Activated CD8-positive, alpha-beta memory T cell treated with anti-CD3 and anti-CD28 coated beads, Interleukin-2, amount 10 ng/mL, durations not matched to agents 7 days and 5 days (primary cell): ENCODE measurements at regions of chr5 and their contacts with region 1.

Region 1: DNA sequence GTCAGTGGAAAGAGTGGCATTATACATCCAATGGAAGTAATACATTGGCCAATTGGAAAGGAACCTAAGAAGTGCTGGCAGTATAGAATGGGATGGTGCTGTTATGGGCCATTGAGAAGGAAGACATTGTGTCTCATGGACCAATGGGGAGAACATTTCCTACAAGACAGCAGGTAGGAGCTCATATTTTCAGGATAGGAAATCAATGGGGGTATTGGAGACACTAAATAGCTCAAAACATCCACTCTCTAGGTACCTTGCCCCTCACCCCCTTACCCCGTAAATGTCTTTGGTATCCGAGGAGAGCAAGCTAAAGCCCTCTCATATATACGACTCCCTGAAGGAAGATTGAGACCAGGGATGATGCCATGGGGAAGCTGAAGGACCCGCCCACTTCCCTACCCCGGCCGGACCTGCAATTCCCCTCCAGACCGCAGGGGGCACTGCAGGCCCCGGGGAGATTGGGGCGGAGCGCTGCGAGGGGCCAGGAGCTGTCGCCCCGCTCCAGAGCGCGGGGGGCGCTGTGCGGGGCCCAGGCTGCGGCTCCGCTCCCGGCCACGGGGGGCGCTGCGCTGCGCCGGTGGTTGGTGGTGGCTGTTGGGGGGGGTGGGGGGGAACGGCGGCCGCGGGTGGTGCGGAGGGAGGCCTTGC is at the start of gene KDM3B:
- DNase-seq: peak; percentile 91
- ATAC-seq: peak; percentile 74
- H3K4me3 Mint-ChIP-seq: peak within 1 kb of the TSS; percentile 94
- H3K27ac Mint-ChIP-seq: peak within 1 kb of the TSS; percentile 97
- H3K4me1 Mint-ChIP-seq: peaks cover 42% of the 10 kb centered on the region
- H3K27me3 Mint-ChIP-seq: no peaks in the 10 kb centered on the region
- total RNA-seq, gene KDM3B: 57.4 to 60.5 TPM

Region 2: DNA sequence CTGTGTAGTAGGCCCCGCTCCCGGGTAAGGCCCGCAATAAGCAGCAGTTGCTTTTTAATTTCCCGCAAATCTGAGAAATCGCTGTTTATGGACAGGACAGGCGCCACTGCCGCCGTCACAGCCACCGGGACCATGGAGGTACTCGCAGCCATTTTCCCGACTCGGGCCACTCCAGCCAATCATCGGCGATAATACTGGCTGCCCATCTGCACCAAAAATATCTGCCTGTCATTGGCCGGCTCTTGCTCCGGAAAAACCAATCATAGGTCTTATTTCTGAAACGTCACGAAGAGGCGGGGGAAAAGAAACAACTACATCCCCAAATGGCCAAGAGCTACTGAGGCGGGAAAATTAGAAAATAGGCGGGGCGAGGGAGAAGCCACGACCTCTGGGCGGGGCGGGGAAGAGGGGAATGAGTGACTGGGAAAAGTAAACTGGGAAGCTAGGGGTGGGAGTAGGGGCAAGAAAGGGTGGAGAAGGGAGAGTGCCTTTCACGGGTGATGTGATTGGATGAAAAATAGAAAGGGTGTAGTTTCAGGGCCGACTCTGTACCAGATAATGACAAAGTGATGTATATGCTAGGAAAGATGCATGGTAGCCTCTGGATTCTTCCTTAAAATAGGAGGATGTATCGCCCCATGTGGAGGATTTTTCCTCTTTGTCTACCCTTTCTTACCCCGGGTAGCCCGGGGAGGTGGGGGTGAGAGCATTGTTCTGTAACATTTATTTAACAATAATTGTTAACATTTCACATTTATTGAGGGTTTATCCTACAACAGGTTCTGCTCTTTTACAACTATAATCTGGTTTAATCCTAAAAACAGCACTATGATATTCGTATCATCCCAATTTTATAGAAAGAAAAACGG is 138.8 kb before region 1 on chr5 and contains the start of gene CDC23:
- CTCF ChIA-PET with region 1: interaction called, 28 read pairs
- DNase-seq: peak; percentile 96
- ATAC-seq: peak; percentile 100
- H3K4me3 Mint-ChIP-seq: peak within 1 kb of the TSS; percentile 97
- H3K27ac Mint-ChIP-seq: peak within 1 kb of the TSS; percentile 99
- H3K4me1 Mint-ChIP-seq: peaks cover 23% of the 10 kb centered on the region
- H3K27me3 Mint-ChIP-seq: no peaks in the 10 kb centered on the region
- total RNA-seq, gene CDC23: 37.0 to 42.7 TPM

Region 3: DNA sequence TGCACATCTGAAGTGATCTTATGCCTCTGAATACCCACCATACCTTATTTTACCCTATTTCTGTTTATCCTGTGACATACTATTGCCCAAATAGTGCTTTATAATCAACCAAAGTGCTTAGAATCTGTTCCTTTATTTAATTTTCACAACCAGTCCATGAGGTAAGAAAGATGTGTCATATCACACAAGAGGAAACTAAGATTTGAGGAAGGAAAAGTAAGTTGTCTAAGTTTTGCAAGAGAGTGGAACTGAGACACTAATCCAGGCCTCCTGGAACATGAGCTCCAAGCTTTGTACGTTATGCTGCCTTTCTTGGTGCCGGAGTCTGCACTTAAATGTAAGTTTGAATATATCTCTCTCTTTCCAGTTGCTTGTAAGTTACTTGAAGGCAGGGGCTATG is 17.5 kb after region 1 on chr5:
- CTCF ChIA-PET with region 1: interaction called, 52 read pairs
- DNase-seq: no peak
- ATAC-seq: no peak
- H3K4me3 Mint-ChIP-seq: no peak overlapping the region
- H3K27ac Mint-ChIP-seq: no peak overlapping the region
- H3K4me1 Mint-ChIP-seq: peaks cover 24% of the 10 kb centered on the region
- H3K27me3 Mint-ChIP-seq: no peaks in the 10 kb centered on the region

Region 4: DNA sequence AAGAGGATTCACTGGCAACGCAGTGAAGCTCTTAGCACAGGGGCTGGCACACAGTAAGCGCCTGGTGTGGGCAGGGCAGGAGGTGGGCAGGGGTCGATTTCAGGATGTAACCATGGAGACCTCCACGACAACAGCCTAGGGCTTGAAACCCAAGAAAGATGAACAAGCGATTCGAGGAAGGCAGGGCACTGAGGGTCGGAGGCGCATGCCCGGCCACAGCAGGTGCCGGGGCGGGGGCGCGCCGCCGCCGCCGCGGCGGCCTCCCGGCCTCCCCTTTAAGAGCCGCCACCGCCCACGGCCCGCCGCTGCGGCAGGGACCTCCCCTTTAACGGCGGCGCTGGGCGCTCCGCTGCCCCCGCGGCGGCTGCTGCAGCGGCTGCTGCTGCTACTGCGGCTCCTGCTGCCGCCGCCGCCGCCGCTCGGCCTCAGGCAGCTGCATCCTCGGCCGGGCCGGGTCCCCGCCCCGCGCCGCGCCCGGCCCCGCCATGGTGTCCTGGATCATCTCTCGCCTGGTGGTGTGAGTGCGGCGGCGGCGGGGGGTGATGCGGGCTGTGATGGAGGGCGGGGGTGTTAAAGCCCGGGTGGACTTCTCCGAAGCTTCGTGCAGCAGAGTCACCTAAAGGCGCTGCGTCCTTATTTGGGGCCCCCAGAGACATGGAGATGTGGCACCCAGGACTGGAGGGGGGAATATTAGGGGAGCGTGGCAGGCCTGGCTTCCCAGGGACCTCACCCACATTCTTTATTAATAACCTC is 86.7 kb after region 1 on chr5 and contains the start of gene REEP2:
- CTCF ChIA-PET with region 1: interaction called, 11 read pairs
- DNase-seq: peak; percentile 65
- ATAC-seq: peak; percentile 91
- H3K4me3 Mint-ChIP-seq: peak within 1 kb of the TSS; percentile 71
- H3K27ac Mint-ChIP-seq: no peak within 1 kb of the TSS
- H3K4me1 Mint-ChIP-seq: peaks cover 13% of the 10 kb centered on the region
- H3K27me3 Mint-ChIP-seq: peaks cover 7% of the 10 kb centered on the region
- total RNA-seq, gene REEP2: 1.7 to 5.4 TPM

Region 5: GRCh38 chr5:138542956-138543729 is 190.9 kb after region 1 on chr5 and contains the start of gene ETF1:
- CTCF ChIA-PET with region 1: interaction called, 18 read pairs
- DNase-seq: peak; percentile 100
- ATAC-seq: peak; percentile 89
- H3K4me3 Mint-ChIP-seq: peak within 1 kb of the TSS; percentile 97
- H3K27ac Mint-ChIP-seq: peak within 1 kb of the TSS; percentile 100
- H3K4me1 Mint-ChIP-seq: peaks cover 66% of the 10 kb centered on the region
- H3K27me3 Mint-ChIP-seq: no peaks in the 10 kb centered on the region
- total RNA-seq, gene ETF1: 92.2 to 134 TPM